Heart left ventricle (tissue), 16 donors: ENCODE measurements at regions of chr11 and their contacts with region 1.

Region 1: DNA sequence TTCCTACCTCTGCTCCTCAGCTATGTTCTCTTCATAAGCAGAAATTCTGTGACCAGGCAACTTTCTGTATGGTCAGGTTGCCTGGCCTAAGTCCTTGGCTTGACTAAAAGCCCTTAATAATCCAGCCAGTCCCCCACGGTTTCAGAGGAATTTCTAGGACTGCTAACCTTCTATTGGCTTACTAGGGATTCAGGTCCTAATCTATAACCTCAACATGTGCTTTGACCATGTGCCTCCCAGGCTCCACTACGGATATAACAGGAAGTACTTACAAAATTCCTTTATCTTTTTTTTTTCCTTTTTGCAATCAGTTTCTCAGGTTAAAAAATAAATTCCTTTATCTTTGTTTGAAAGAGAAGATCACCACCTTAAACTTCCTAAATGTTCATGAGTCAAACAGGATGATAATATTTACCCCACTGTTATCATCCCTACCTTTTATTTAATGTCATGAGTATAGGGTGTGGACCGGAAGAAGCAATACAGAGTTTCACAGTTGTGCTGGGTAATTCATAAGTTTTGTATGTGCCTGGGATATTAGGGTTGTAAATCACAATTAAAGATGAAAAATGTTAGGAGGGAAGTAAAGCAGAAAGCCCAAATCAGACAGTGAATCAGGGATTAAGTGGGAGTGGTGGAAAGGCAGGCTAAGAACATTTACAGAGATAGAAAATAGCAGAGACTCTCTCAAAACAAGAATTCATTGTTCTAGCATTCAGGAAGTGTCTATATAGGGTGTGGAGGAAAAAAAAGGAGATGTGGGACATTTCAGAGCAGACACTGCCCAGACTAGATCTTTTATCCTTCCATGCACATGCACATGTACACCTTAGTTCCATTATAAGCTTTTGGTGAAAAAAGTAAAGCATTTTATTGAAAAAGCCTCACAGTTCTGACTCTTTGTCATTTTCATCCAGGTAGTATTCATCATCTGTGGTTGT is 10.7 kb upstream of the POGLUT3 start:
- DNase-seq: no peak
- ATAC-seq: no peak
- H3K4me3 ChIP-seq: no peak overlapping the region
- H3K27ac ChIP-seq: no peak overlapping the region
- H3K4me1 ChIP-seq: no peaks in the 10 kb centered on the region
- H3K27me3 ChIP-seq: no peaks in the 10 kb centered on the region
- CTCF ChIP-seq: no peak
- POLR2A ChIP-seq: no peak

Region 2: DNA sequence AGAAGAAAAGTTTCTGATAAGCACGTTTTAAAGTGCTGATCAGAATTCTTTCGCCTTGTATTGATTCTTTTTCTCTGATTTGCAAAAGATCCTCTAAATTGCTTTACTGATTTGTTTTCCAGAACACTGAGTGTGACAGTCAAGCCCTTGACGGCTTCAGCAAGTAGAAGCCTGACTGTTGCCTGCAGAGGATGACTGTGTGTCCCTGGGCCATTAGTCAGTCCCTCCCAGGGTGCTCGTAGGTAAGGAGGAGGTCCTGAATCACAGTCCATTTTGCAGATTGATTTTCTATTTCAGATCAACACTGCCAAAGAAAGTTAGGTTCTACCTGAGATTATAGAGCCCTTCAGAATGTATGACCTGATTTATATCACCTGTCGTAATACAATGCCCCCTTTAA is 27.9 kb after region 1 on chr11:
- intact Hi-C with region 1: loop called in 1 of 10 experiments (anchors 2 kb)
- DNase-seq: no peak
- ATAC-seq: no peak
- H3K4me3 ChIP-seq: no peak overlapping the region
- H3K27ac ChIP-seq: no peak overlapping the region
- H3K4me1 ChIP-seq: no peaks in the 10 kb centered on the region
- H3K27me3 ChIP-seq: no peaks in the 10 kb centered on the region
- CTCF ChIP-seq: no peak
- POLR2A ChIP-seq: no peak